HEK293 (cell line): ENCODE measurements at regions of chr18 and their contacts with region 1.

Region 1: GRCh38 chr18:52791321-52791720 is 451.3 kb downstream of the DCC start:
- H3K4me3 ChIP-seq: no peak overlapping the region
- H3K27ac ChIP-seq: no peak overlapping the region
- H3K4me1 ChIP-seq: no peaks in the 10 kb centered on the region
- CTCF ChIP-seq: no peak

Region 2: GRCh38 chr18:52716973-52717372 is 74.3 kb before region 1 on chr18:
- CTCF ChIA-PET with region 1: interaction called, 10 read pairs
- POLR2A ChIA-PET with region 1: no interaction called
- H3K4me3 ChIP-seq: no peak overlapping the region
- H3K27ac ChIP-seq: no peak overlapping the region
- H3K4me1 ChIP-seq: no peaks in the 10 kb centered on the region
- CTCF ChIP-seq: no peak